ENCODE measurements at regions of chr17 and their contacts with region 1.

Region 1: DNA sequence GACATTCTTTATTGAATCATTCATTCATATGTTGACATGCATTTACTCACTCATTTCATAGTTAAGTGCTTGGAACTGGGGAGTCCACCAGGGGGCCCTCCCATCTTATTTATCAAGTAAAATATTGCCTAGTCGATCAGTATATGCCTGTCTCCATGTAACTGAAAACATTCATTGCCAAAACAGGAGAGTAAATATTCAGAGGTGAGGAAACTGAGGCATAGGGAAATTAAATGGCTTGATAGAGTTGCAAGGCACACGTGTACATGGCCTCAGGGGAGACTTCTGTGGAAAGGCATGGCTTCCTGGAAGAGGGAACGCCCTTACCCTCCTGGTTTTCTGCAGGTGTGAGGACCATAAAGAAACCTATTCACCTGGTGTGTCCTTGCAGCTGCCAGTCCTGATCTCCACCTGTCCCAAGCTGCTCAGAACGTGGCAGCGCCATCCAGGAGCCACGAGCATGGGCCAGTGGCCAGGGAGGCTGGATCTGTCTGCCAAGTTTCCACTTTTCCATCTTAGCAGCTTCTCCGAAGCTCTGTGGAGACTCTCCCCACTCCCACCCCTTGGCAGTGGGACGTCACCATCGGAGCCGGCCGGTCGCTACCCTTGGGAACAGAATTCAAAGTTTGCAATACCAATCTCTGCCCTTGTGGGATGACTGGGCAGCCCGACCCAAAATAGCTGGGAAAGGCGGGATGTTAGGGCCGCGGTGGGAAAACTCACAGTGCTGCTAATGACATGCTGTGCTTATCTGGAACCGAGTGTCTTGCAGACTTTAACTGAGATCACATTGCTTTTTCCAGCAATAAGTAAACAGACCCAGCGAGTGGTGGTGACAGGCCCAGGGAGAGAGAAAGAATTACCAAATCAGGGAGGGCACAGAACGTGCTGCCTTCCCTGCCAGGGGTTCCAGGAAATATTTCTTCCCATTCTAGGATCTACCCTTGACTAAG is 4.1 kb upstream of the C1QTNF1 start:
- DNase-seq: peak; percentile 58
- H3K4me3 Mint-ChIP-seq: no peak overlapping the region
- H3K27ac Mint-ChIP-seq: no peak overlapping the region
- H3K4me1 Mint-ChIP-seq: peaks cover 8% of the 10 kb centered on the region
- H3K27me3 Mint-ChIP-seq: peaks cover 18% of the 10 kb centered on the region

Region 2: GRCh38 chr17:79045842-79046196 is 25.9 kb after region 1 on chr17:
- CTCF ChIA-PET with region 1: interaction called, 32 read pairs
- POLR2A ChIA-PET with region 1: interaction called, 3 read pairs
- intact Hi-C with region 1: loop called (anchors 1 kb)
- DNase-seq: peak; percentile 75
- H3K4me3 Mint-ChIP-seq: no peak overlapping the region
- H3K27ac Mint-ChIP-seq: no peak overlapping the region
- H3K4me1 Mint-ChIP-seq: no peaks in the 10 kb centered on the region
- H3K27me3 Mint-ChIP-seq: peaks cover 15% of the 10 kb centered on the region